ENCODE measurements at regions of chr5 and their contacts with region 1.

Region 1: DNA sequence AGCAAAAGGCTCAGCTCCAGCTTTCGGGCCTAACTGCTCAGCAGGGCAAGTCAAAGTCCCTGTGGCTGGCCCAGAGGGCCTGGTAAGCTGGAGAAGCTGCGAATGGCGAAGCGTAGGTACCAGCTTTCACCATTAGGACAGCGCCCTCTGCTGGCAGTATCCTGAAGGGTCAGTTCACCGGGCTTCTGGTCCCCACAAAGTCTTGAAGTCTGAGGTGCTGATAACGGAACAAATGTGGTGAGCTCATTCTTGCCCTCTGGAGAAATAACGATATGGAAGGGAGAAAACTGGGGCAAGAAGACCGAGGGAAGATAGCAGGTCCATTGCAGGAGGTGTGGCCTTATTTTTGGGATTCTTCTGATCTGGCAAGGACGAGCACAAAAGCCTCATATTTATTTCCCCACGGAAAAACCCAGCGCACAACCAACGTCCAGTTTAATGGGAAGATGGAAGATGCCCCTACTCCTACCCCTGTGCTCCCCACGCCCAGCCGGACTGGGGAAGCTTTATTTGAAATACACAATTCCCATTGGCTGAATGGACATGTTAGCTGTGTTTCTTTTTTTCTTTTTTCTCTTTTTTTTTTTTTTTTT is 7.2 kb downstream of the SOWAHA start:
- DNase-seq: peak; percentile 92
- H3K4me3 ChIP-seq: no peak overlapping the region; a peak in 1 of 4 replicates
- H3K27ac ChIP-seq: no peak overlapping the region
- H3K4me1 ChIP-seq: peaks cover 0 to 6% of the 10 kb centered on the region in 2 experiments; a peak in 1 of 4 replicates
- H3K27me3 ChIP-seq: no peaks in the 10 kb centered on the region
- CTCF ChIP-seq: peak; percentile 91
- EP300 ChIP-seq: no peak
- RAD21 ChIP-seq: peak; percentile 90

Region 2: GRCh38 chr5:132466433-132467286 is 353.6 kb before region 1 on chr5:
- CTCF ChIA-PET with region 1: no interaction called
- POLR2A ChIA-PET with region 1: no interaction called
- DNase-seq: no peak
- H3K4me3 ChIP-seq: no peak overlapping the region
- H3K27ac ChIP-seq: peak overlapping the region in 1 of 2 experiments; percentile 34; a peak in 1 of 4 replicates
- H3K4me1 ChIP-seq: peaks cover 9 to 53% of the 10 kb centered on the region in 2 experiments; a peak in 3 of 4 replicates
- H3K27me3 ChIP-seq: no peaks in the 10 kb centered on the region
- CTCF ChIP-seq: no peak
- EP300 ChIP-seq: no peak
- RAD21 ChIP-seq: no peak

Region 3: DNA sequence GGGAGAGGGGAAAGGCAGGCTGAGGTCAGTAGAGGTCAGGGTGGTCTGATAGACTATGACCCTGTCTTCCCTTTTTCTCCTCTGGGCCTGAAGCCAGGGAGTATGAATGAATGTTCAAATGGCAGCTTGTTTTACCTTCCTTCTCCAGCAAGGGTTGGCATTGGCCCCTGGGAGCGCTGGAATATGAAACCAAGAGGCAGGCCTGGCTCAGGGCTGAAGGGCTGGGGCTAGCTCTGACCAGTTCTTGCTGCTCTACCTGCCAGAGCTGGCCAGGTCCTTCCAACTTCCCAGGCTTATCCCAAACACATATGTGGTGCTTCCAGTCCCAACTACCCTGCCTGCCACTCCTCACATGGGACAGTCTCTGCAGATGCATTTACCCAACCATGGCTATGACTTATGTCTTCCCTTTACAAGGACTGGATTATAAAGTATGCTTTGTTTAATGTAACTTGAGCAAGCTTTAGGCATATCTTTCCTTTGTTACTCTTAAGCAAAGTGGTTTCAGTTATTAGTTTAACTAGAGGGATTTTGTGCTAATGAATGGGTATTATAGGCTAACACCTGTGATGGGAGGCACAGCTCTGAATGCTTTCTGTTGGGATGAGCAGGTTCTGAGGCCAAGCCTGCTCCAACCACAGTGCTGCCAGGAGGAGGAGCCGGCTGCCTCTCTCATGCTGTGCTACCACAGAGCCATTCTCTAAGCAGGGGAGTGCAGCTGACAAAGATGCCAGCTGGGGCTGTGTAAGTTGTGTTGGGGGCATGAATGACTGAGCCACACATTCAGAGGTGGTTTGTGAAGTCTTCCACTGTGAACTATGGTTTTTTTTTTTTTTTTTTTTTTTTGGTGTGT is 66.9 kb before region 1 on chr5:
- CTCF ChIA-PET with region 1: interaction called, 98 read pairs
- POLR2A ChIA-PET with region 1: interaction called, 3 read pairs
- DNase-seq: peak; percentile 47
- H3K4me3 ChIP-seq: no peak overlapping the region
- H3K27ac ChIP-seq: no peak overlapping the region
- H3K4me1 ChIP-seq: no peaks in the 10 kb centered on the region
- H3K27me3 ChIP-seq: no peaks in the 10 kb centered on the region
- CTCF ChIP-seq: peak; percentile 42
- EP300 ChIP-seq: no peak
- RAD21 ChIP-seq: peak; percentile 58

Region 4: DNA sequence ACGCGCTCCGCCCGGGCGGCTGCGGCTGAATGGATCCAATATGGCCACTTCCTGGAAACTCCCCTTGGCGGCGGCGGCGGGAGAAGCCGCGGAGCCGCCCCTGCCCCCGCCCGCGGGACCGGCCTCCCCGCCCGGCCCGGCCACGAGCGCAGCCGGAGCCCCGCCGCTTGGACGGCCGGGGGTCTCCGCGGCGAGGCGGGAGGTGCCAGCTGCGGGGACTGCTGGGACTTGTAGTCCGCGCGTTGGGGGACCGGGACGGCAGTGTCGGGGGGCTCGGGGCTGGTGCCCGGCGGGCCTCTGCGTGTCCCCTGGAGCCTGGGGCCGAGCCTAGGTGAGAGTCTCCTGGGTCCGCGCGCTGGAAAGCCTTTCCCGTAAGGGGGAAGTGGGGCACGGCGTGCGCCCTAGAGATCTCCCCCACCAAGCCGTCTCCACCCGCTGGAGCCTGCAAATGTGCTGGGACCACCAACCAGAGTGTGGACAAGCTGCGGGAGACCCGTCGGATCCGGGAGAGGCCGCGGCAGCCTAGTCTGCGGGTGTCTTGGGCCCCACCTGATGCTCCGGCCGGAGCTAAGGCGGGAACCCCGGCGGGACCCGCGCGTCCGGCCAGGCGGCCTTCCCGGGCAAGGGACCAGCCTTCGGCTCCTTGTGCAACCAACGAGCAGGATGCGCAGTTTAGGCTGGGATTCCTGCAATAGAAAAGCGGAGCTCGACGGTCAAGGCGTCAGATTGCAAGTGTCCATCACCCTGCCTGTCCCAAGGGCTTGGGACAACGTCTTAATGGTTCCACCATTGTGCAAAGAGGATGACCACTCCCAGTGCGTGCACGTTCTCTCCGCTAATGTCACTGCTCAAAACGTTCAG is 42.8 kb before region 1 on chr5 and contains the start of gene SEPTIN8:
- CTCF ChIA-PET with region 1: interaction called, 16 read pairs
- POLR2A ChIA-PET with region 1: no interaction called
- DNase-seq: peak; percentile 90
- H3K4me3 ChIP-seq: peak within 1 kb of the TSS; percentile 75 to 85
- H3K27ac ChIP-seq: no peak within 1 kb of the TSS; a peak in 1 of 4 replicates
- H3K4me1 ChIP-seq: peaks cover 19 to 42% of the 10 kb centered on the region in 2 experiments; a peak in 2 of 4 replicates
- H3K27me3 ChIP-seq: no peaks in the 10 kb centered on the region
- CTCF ChIP-seq: no peak
- EP300 ChIP-seq: no peak
- RAD21 ChIP-seq: no peak
- polyA plus RNA-seq, gene SEPTIN8: 54.9 and 57.6 TPM in 2 replicates

Region 5: DNA sequence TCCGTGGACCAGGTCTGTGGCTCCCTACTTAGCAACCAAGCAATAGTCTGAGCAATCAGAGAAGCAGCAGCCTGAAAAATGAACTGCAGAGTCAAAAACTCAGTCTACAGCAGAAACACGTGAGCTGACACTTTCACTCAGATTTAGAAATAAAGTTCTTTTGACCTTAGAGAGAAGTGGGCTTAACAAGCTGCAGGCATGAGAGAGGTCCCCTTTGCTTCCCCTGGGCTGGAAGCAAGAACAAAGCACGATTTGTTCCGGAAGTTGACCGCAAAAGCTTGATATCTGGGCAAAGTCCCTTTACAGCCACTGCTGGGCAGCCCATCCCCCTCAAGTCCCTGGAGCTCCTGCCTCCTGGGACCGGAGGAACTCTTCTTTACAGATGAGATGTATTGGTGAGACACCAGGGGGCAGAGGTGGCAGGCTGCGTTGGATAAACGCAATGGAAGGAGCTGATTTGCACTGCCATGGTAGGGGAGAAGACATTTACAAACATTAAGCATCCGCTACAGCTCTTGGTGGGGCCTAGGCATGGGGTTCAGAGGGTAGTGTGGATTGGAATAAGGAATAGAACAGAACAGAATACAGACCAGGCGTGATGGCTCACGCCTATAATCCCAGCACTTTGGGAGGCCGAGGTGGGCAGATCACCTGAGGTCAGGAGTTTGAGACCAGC is 13.0 kb before region 1 on chr5:
- CTCF ChIA-PET with region 1: interaction called, 25 read pairs
- POLR2A ChIA-PET with region 1: no interaction called
- DNase-seq: no peak
- H3K4me3 ChIP-seq: no peak overlapping the region
- H3K27ac ChIP-seq: no peak overlapping the region
- H3K4me1 ChIP-seq: peaks cover 0 to 3% of the 10 kb centered on the region in 2 experiments; a peak in 1 of 4 replicates
- H3K27me3 ChIP-seq: no peaks in the 10 kb centered on the region
- CTCF ChIP-seq: peak; percentile 24; the same call in 1 of the 2 replicates
- EP300 ChIP-seq: no peak
- RAD21 ChIP-seq: no peak

Region 6: GRCh38 chr5:132883261-132883834 is 63.1 kb after region 1 on chr5:
- CTCF ChIA-PET with region 1: interaction called, 11 read pairs
- POLR2A ChIA-PET with region 1: no interaction called
- DNase-seq: peak; percentile 53
- H3K4me3 ChIP-seq: no peak overlapping the region
- H3K27ac ChIP-seq: peak overlapping the region in 1 of 2 experiments; percentile 32; a peak in 2 of 4 replicates
- H3K4me1 ChIP-seq: no peaks in the 10 kb centered on the region; a peak in 1 of 4 replicates
- H3K27me3 ChIP-seq: no peaks in the 10 kb centered on the region
- CTCF ChIP-seq: peak; percentile 73
- EP300 ChIP-seq: no peak
- RAD21 ChIP-seq: peak; percentile 65

Region 7: DNA sequence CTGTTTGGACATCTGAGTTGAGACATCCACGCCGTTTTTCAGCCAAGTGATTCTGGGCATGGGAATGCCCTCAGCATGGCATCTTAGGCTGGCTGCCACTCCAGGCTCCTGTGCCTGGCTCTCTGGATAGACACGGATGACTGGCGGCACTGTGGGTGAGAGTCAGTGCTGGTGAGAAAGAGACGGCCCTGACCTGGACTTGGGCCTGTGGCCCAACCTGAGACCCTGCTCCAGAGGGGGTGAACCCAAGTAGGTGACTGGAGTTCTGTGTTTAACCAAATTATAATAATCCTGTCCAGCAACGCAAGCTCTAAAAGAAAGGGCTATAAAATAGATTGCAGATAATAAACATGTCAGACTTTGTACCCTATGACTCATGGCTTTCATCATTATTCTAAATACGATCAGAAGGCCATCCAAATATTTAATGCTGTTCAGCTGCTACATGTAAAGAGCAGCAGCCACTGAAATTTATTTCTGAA is 405.5 kb after region 1 on chr5:
- CTCF ChIA-PET with region 1: no interaction called
- POLR2A ChIA-PET with region 1: no interaction called
- DNase-seq: no peak
- H3K4me3 ChIP-seq: no peak overlapping the region
- H3K27ac ChIP-seq: no peak overlapping the region
- H3K4me1 ChIP-seq: peaks cover 0 to 3% of the 10 kb centered on the region in 2 experiments; a peak in 2 of 4 replicates
- H3K27me3 ChIP-seq: no peaks in the 10 kb centered on the region
- CTCF ChIP-seq: no peak
- EP300 ChIP-seq: no peak
- RAD21 ChIP-seq: no peak

Measured in SK-N-SH (cell line).